ENCODE measurements at regions of chr2 and their contacts with region 1.

Region 1: DNA sequence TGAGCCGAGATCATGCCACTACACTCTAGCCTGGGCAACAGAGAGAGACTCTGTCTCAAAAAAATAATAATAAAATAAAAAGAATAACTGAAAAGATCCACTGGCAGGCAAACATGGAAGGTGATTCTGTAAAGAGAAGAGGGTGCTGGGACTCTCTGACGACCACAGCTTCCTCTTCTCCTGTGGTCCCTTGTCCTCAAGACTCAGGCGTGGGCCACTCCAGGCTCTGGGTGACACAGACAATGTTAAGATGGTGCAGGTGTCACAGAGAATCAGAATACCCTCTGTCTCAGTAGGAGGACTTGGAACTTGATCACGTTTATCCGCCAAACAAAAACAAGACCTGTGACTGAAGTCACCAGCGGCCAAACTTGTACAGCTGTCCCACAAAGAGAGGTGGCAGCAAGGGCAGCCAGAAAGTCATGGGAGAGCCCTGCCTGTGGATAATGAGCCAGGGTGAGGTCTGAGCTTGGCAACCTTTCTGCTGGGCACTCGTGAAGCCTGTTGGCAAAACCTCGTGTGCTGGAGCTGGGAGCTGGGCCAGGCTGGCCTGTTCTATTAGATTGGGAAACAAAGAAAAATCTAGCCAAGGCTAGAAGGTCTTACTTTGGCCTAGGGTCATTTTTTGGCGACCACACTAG is 76.4 kb upstream of the ITGA6 start:
- DNase-seq: peak; percentile 64 to 83
- H3K4me3 ChIP-seq: no peak overlapping the region
- H3K27ac ChIP-seq: peak overlapping the region; percentile 71 to 85
- H3K4me1 ChIP-seq: peaks cover 5 to 10% of the 10 kb centered on the region in 2 donors
- H3K27me3 ChIP-seq: no peaks in the 10 kb centered on the region
- CTCF ChIP-seq: peak in 1 of 3 experiments; percentile 44

Region 2: GRCh38 chr2:172427256-172427989 is 76.5 kb after region 1 on chr2 and contains the start of gene ITGA6:
- intact Hi-C with region 1: loop called (anchors 5 kb)
- DNase-seq: peak in 1 of 2 donors; percentile 78
- H3K4me3 ChIP-seq: peak within 1 kb of the TSS; percentile 68 to 85
- H3K27ac ChIP-seq: peak within 1 kb of the TSS; percentile 30 to 32
- H3K4me1 ChIP-seq: peaks cover 5 to 7% of the 10 kb centered on the region in 2 donors
- H3K27me3 ChIP-seq: no peaks in the 10 kb centered on the region
- CTCF ChIP-seq: no peak
- total RNA-seq, gene ITGA6: 40.7 TPM

Measured in ascending aorta (tissue), 2 donors.